Activated CD8-positive, alpha-beta T cell treated with anti-CD3 and anti-CD28 coated beads for 36 hours (primary cell): ENCODE measurements at regions of chr6 and their contacts with region 1.

Region 1: DNA sequence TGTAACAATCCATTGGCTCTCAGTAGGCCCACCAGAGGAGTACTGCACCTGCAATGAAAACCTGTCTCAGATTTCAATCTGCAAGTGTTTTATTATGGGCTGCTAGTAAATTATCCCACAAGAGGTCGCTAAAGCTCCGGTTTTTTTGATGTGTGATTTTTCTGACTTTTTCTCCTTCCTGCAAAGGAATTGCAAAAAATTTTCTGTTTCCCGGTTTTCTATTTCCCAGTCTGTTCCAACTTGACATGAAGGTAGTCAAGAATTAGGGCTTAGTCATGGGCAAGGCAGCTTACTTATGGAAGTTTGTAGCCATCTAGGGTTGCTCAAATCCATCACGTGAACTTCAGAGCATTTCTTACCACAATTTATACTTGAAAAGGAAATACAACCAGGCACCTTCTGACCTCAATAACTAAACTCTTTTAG is 38.5 kb upstream of the AHI1 start:
- DNase-seq: peak; percentile 18
- ATAC-seq: no peak
- H3K4me3 Mint-ChIP-seq: no peak overlapping the region
- H3K27ac Mint-ChIP-seq: peak overlapping the region; percentile 70
- H3K4me1 Mint-ChIP-seq: peaks cover 33% of the 10 kb centered on the region
- H3K27me3 Mint-ChIP-seq: peaks cover 2% of the 10 kb centered on the region
- CTCF ChIP-seq: peak; percentile 87

Region 2: DNA sequence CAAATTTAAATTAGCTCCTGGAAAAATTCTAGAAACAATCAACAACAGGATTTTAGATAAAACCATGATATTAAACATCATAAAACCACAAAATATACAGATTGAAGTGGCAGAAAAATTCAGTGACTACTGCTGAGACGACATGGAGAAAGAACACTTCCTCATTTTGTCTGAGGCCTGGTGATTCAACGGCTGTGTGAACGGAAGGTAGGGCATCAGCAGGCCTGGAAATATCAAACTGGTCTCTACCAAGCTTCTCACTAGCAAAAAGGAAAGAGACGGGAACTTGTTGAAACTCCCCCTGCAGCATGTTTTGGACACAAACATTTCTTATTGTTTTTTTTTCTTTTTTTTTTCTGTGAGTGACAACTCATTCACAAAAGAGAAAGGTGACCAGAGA is 19.5 kb after region 1 on chr6:
- CTCF ChIA-PET with region 1: interaction called, 18 read pairs
- POLR2A ChIA-PET with region 1: interaction called, 3 read pairs
- intact Hi-C with region 1: no loop called
- DNase-seq: no peak
- ATAC-seq: no peak
- H3K4me3 Mint-ChIP-seq: no peak overlapping the region
- H3K27ac Mint-ChIP-seq: no peak overlapping the region
- H3K4me1 Mint-ChIP-seq: peaks cover 5% of the 10 kb centered on the region
- H3K27me3 Mint-ChIP-seq: peaks cover 17% of the 10 kb centered on the region
- CTCF ChIP-seq: no peak

Region 3: DNA sequence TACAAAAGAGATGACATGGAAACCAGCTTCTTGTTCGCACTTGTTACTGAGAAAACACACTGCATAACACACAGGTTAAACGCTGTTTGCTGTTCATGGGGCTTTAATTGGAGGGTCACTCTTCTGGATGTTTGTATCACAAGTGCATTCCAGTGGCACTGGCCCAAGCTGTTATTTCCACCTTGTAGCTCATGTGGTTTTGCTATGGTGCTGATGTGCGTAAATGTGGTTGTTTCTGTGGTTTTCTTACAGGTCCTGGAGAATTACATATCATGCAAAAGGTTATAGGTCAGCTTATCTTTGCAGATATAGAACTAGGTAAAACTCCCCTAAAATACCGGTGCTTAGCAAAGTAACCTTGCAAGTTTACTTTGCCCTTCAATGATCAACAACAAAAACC is 50.8 kb after region 1 on chr6:
- CTCF ChIA-PET with region 1: interaction called, 10 read pairs
- POLR2A ChIA-PET with region 1: interaction called, 3 read pairs
- intact Hi-C with region 1: no loop called
- DNase-seq: peak; percentile 72
- ATAC-seq: peak; percentile 75
- H3K4me3 Mint-ChIP-seq: no peak overlapping the region
- H3K27ac Mint-ChIP-seq: peak overlapping the region; percentile 80
- H3K4me1 Mint-ChIP-seq: peaks cover 39% of the 10 kb centered on the region
- H3K27me3 Mint-ChIP-seq: no peaks in the 10 kb centered on the region
- CTCF ChIP-seq: no peak

Region 4: GRCh38 chr6:135640449-135641111 is 104.6 kb after region 1 on chr6:
- CTCF ChIA-PET with region 1: interaction called, 6 read pairs
- POLR2A ChIA-PET with region 1: no interaction called
- intact Hi-C with region 1: loop called (anchors 5 kb)
- DNase-seq: peak; percentile 37
- ATAC-seq: peak; percentile 91
- H3K4me3 Mint-ChIP-seq: peak overlapping the region; percentile 15
- H3K27ac Mint-ChIP-seq: peak overlapping the region; percentile 80
- H3K4me1 Mint-ChIP-seq: peaks cover 48% of the 10 kb centered on the region
- H3K27me3 Mint-ChIP-seq: no peaks in the 10 kb centered on the region
- CTCF ChIP-seq: no peak

Region 5: GRCh38 chr6:135675862-135676261 is 139.9 kb after region 1 on chr6:
- CTCF ChIA-PET with region 1: interaction called, 20 read pairs
- POLR2A ChIA-PET with region 1: no interaction called
- intact Hi-C with region 1: loop called (anchors 5 kb)
- DNase-seq: peak; percentile 54
- ATAC-seq: peak; percentile 61
- H3K4me3 Mint-ChIP-seq: no peak overlapping the region
- H3K27ac Mint-ChIP-seq: no peak overlapping the region
- H3K4me1 Mint-ChIP-seq: peaks cover 28% of the 10 kb centered on the region
- H3K27me3 Mint-ChIP-seq: no peaks in the 10 kb centered on the region
- CTCF ChIP-seq: peak; percentile 74

Region 6: DNA sequence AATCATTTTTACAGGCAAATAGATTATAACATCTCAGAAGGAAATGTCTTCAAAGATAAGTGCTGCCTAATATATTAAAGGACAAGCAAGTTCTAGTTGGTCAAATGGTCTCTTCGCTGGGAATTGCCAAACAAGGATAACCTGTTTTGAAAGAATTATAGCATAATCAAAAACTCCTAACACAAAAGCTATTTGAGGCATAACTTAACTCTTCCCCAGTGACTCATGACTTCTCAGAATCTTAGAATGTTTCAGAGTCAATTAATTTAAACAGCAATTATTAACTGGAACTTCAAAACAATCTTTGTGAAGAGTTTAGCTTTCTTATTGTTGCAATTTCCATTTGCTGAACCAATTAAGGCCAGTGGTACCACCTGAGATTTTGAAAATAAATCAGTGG is 587.5 kb after region 1 on chr6:
- CTCF ChIA-PET with region 1: no interaction called
- POLR2A ChIA-PET with region 1: no interaction called
- intact Hi-C with region 1: no loop called
- DNase-seq: no peak
- ATAC-seq: no peak
- H3K4me3 Mint-ChIP-seq: no peak overlapping the region
- H3K27ac Mint-ChIP-seq: no peak overlapping the region
- H3K4me1 Mint-ChIP-seq: no peaks in the 10 kb centered on the region
- H3K27me3 Mint-ChIP-seq: peaks cover 1% of the 10 kb centered on the region
- CTCF ChIP-seq: no peak

Region 7: DNA sequence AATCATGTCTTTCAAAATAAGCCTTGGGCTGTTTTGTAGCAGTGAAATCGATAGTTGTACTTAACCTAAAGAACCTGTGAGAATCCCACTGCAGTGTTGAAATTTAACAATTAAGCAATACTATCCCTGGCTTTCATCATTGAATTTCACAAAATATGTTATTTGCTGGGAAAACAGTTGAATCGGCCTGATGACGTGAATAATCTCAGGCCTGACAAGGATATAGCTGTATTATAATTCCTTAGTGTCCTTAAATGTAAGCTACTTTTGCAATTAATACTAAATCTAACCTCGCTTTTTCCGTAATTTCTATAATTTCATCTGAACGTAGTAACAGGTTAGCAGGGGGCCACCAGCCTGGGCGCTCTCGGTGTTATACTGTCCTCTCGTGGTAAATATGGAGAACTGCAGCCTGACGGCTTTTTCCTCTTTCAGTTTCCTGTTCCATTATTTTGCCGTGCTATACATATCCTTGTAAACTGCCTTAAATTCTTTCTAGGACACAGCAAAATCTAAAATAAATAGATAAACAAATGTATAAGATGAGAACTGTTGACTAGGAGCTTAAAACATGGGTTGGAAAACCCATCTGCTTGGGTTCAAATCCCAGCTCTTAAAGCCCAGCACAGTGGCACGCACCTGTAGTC is 690.1 kb after region 1 on chr6:
- CTCF ChIA-PET with region 1: interaction called, 19 read pairs
- POLR2A ChIA-PET with region 1: no interaction called
- intact Hi-C with region 1: loop called (anchors 2 kb)
- DNase-seq: peak; percentile 74
- ATAC-seq: peak; percentile 93
- H3K4me3 Mint-ChIP-seq: no peak overlapping the region
- H3K27ac Mint-ChIP-seq: no peak overlapping the region
- H3K4me1 Mint-ChIP-seq: peaks cover 9% of the 10 kb centered on the region
- H3K27me3 Mint-ChIP-seq: no peaks in the 10 kb centered on the region
- CTCF ChIP-seq: peak; percentile 100